PC-9 (cell line): ENCODE measurements at regions of chr1 and their contacts with region 1.

Region 1: DNA sequence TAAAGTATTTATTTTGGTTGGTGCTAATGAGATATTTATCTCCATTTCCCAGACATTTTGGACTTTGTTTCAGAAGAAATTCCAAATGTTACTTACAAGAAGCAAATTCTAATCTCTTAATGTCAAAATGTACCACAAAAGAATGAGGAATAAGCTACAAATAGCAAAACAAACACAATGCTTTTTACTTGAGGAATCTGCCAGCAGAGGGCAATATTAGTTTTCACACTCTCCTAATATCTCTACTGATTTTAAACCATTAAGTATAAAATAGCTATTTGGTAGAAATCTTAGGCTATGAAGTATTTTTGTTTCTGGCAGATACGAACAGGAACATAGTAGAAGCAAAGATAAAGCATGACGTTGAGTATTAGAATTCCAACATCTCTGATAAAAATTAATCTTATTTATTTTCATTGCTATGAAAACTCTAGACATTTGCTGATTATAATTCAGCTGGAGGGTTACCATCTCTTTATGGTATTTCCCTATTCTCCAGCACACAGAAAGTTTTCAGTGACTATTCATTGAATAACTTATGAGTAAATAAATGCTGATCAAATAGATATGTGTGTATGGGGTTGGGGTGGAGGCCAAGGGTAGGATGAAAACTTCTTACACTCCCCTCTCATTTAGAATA is 13.4 kb upstream of the HMCN1 start:
- DNase-seq: peak in 1 of 2 experiments; percentile 37
- H3K4me3 ChIP-seq: no peak overlapping the region
- H3K27ac ChIP-seq: no peak overlapping the region
- H3K4me1 ChIP-seq: no peaks in the 10 kb centered on the region
- H3K27me3 ChIP-seq: no peaks in the 10 kb centered on the region
- CTCF ChIP-seq: peak; percentile 76

Region 2: GRCh38 chr1:184724843-184725242 is 995.9 kb before region 1 on chr1:
- CTCF ChIA-PET with region 1: no interaction called
- POLR2A ChIA-PET with region 1: interaction called, 10 read pairs
- intact Hi-C with region 1: no loop called
- DNase-seq: no peak
- H3K4me3 ChIP-seq: no peak overlapping the region
- H3K27ac ChIP-seq: no peak overlapping the region
- H3K4me1 ChIP-seq: no peaks in the 10 kb centered on the region
- H3K27me3 ChIP-seq: no peaks in the 10 kb centered on the region
- CTCF ChIP-seq: no peak

Region 3: GRCh38 chr1:185767508-185768120 is 46.9 kb after region 1 on chr1:
- CTCF ChIA-PET with region 1: no interaction called
- POLR2A ChIA-PET with region 1: no interaction called
- intact Hi-C with region 1: loop called (anchors 2 kb)
- DNase-seq: no peak
- H3K4me3 ChIP-seq: no peak overlapping the region
- H3K27ac ChIP-seq: no peak overlapping the region
- H3K4me1 ChIP-seq: no peaks in the 10 kb centered on the region
- H3K27me3 ChIP-seq: no peaks in the 10 kb centered on the region
- CTCF ChIP-seq: no peak

Region 4: DNA sequence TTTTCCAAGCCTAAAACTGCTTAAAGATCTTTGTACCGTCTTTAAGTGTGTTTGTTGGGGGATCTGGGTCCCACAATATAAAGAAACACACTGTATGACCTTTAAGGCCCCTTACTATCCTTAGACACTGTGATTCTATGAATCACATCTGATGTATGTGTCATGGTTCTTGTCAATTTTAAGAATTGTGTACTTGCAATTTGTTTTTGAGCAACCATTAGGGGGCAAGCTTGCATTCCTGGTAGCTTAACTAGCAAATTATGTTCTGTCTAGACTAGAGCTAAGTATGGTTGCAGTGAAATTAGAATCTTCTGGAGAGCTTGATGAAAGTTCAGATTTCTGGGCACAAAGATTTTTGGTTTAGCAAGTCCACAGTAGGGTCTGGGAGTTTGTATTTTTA is 434.8 kb after region 1 on chr1:
- CTCF ChIA-PET with region 1: interaction called, 11 read pairs
- POLR2A ChIA-PET with region 1: no interaction called
- intact Hi-C with region 1: no loop called
- DNase-seq: peak; percentile 11 to 62
- H3K4me3 ChIP-seq: no peak overlapping the region
- H3K27ac ChIP-seq: no peak overlapping the region
- H3K4me1 ChIP-seq: peaks cover 21% of the 10 kb centered on the region
- H3K27me3 ChIP-seq: no peaks in the 10 kb centered on the region
- CTCF ChIP-seq: peak; percentile 66

Region 5: GRCh38 chr1:186295980-186296379 is 575.2 kb after region 1 on chr1:
- CTCF ChIA-PET with region 1: no interaction called
- POLR2A ChIA-PET with region 1: no interaction called
- intact Hi-C with region 1: loop called (anchors 10 kb)
- DNase-seq: no peak
- H3K4me3 ChIP-seq: no peak within 1 kb of the TSS
- H3K27ac ChIP-seq: no peak within 1 kb of the TSS
- H3K4me1 ChIP-seq: no peaks in the 10 kb centered on the region
- H3K27me3 ChIP-seq: no peaks in the 10 kb centered on the region
- CTCF ChIP-seq: no peak